IMR-90 (cell line): ENCODE measurements at regions of chr21 and their contacts with region 1.

Region 1: GRCh38 chr21:29287383-29287782 is 11.3 kb upstream of the BACH1 start:
- DNase-seq: peak; percentile 52
- ATAC-seq: peak; percentile 37
- H3K4me3 ChIP-seq: no peak overlapping the region
- H3K27ac ChIP-seq: no peak overlapping the region
- H3K4me1 ChIP-seq: peaks cover 3% of the 10 kb centered on the region; the same call in 1 of the 2 replicates
- H3K27me3 ChIP-seq: no peaks in the 10 kb centered on the region
- CTCF ChIP-seq: no peak
- POLR2A ChIP-seq: no peak
- RAD21 ChIP-seq: no peak

Region 2: DNA sequence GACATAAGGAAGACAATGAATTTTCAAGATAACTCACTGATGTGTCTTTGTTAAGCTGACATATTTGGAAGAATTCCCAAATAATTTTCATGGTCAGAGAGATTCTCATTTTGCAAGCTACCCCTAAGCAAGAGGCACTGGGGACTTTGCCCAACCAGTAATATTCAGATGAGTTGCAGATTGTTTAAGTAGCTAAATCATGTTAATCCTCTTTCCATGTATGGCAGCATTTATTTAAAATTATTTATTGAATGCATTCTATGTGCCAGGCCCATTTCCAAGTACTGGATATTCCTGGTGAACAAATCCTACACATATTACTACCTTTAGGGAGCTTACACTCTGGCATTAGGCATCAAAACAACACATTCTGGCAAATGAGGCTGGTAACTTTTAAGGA is 45.2 kb before region 1 on chr21:
- CTCF ChIA-PET with region 1: no interaction called
- POLR2A ChIA-PET with region 1: no interaction called
- dilution Hi-C with region 1: no loop called
- in situ Hi-C with region 1: loop called (anchors 5 kb)
- intact Hi-C with region 1: no loop called
- DNase-seq: no peak
- ATAC-seq: no peak
- H3K4me3 ChIP-seq: no peak overlapping the region
- H3K27ac ChIP-seq: no peak overlapping the region
- H3K4me1 ChIP-seq: peaks cover 17% of the 10 kb centered on the region
- H3K27me3 ChIP-seq: no peaks in the 10 kb centered on the region
- CTCF ChIP-seq: no peak
- POLR2A ChIP-seq: no peak
- RAD21 ChIP-seq: no peak

Region 3: GRCh38 chr21:30153697-30154340 is 866.4 kb after region 1 on chr21:
- CTCF ChIA-PET with region 1: no interaction called
- POLR2A ChIA-PET with region 1: no interaction called
- dilution Hi-C with region 1: no loop called
- in situ Hi-C with region 1: no loop called
- intact Hi-C with region 1: loop called (anchors 5 kb)
- DNase-seq: no peak
- ATAC-seq: no peak
- H3K4me3 ChIP-seq: no peak overlapping the region
- H3K27ac ChIP-seq: no peak overlapping the region
- H3K4me1 ChIP-seq: no peaks in the 10 kb centered on the region
- H3K27me3 ChIP-seq: no peaks in the 10 kb centered on the region
- CTCF ChIP-seq: no peak
- POLR2A ChIP-seq: no peak
- RAD21 ChIP-seq: no peak